Ovary (tissue), 10 donors: ENCODE measurements at regions of chr15 and their contacts with region 1.

Region 1: DNA sequence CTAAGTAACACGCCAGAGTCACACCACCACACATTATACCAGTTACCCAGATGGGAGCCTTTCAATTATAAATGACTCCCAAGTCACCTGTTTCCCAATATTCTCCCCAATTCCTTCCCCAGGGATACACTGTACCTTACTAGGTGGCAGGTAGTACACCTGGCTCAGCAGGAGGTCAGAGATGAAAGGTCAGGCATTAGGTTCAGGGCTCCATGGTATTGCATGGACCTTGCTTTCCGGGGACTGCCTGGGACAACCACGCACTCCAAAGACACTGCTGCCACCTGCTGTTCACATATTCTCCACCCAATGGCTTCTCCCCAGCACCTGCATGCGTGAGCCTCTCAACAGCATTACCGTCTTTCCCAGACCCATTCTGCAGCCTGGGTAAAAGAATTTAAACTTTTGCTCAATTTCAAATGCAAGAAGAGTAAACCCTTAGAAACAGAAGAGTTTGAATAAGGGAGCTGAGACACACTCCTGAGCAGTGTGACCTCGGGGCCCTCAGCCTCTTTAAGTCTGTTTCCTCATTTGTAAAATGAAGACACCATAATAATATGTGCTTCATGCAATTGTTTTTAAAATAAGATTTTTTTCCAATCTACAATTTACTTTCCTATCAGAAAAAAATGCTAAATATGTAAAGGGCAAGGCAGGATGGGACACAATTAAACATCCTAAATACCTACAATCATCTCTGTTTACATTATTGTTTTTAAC is 28.0 kb upstream of the LACTB start:
- DNase-seq: peak; percentile 82 to 87 (median 86)
- H3K4me3 ChIP-seq: no peak overlapping the region
- H3K27ac ChIP-seq: no peak overlapping the region
- H3K4me1 ChIP-seq: no peaks in the 10 kb centered on the region
- H3K27me3 ChIP-seq: no peaks in the 10 kb centered on the region
- CTCF ChIP-seq: peak; percentile 71 to 91 (median 86)
- EP300 ChIP-seq: no peak
- POLR2A ChIP-seq: no peak

Region 2: GRCh38 chr15:62782039-62782791 is 311.4 kb before region 1 on chr15:
- intact Hi-C with region 1: loop called in 3 of 4 experiments (anchors 2 to 10 kb)
- DNase-seq: peak; percentile 55 to 76 (median 69)
- H3K4me3 ChIP-seq: no peak overlapping the region
- H3K27ac ChIP-seq: no peak overlapping the region
- H3K4me1 ChIP-seq: peaks cover 14% of the 10 kb centered on the region
- H3K27me3 ChIP-seq: no peaks in the 10 kb centered on the region
- CTCF ChIP-seq: peak; percentile 26 to 55 (median 33)
- EP300 ChIP-seq: no peak
- POLR2A ChIP-seq: no peak

Region 3: DNA sequence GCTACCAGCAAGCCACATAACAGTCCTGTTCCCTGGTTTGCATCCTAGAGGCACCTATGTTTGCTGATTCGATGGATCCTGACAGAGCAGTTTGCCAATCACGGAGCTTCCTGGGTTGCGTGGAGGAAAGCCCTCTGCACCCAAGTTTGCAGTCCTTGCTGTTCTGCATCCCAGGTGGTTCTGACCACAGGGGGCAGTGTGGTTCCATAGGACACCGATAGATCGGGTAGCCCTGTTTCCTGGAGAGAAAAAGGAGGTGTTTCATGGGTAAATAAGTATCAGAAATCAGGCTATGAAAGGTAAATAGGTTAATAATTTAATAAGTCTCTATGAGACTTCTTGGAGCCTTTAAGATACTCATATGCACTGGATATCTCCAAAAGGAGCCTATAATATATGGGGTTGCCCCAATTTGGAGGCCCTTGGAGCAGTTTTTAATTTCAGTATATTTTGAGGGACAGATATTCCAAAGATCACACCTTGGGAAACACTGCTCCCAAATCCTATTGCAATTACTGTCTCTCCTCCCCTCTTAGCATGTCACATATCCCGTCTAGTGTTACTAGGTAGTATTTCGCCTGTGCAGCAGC is 245.7 kb before region 1 on chr15:
- intact Hi-C with region 1: loop called (anchors 1 to 10 kb)
- DNase-seq: peak; percentile 69 to 81 (median 77)
- H3K4me3 ChIP-seq: no peak overlapping the region
- H3K27ac ChIP-seq: no peak overlapping the region
- H3K4me1 ChIP-seq: no peaks in the 10 kb centered on the region
- H3K27me3 ChIP-seq: no peaks in the 10 kb centered on the region
- CTCF ChIP-seq: peak in 2 of 3 donors; percentile 41 to 58
- EP300 ChIP-seq: no peak
- POLR2A ChIP-seq: no peak

Region 4: DNA sequence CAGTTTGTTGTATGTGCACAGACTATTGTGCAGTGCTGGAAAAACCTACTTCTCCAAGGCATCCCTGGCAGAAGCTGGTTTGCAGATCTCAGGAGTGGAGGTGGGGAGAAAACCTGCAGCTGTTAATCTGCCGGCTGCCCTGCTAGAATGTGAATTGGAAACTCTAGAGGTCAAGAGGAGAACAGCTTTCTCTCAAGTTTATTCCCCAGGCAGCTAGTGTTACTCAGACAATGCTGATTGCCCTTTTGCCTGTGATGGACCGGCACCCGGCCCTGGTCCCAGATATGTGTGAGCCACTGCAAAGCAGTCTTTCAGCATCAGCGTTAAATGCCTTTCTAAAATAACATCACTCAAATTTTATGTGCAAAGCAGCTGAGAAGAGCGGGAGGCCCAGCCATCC is 180.8 kb before region 1 on chr15:
- intact Hi-C with region 1: no loop called
- DNase-seq: no peak
- H3K4me3 ChIP-seq: no peak overlapping the region
- H3K27ac ChIP-seq: no peak overlapping the region
- H3K4me1 ChIP-seq: no peaks in the 10 kb centered on the region
- H3K27me3 ChIP-seq: no peaks in the 10 kb centered on the region
- CTCF ChIP-seq: no peak
- EP300 ChIP-seq: no peak
- POLR2A ChIP-seq: no peak

Region 5: GRCh38 chr15:63030101-63030551 is 63.5 kb before region 1 on chr15:
- intact Hi-C with region 1: no loop called
- DNase-seq: peak in 2 of 5 donors; percentile 33 to 43
- H3K4me3 ChIP-seq: no peak overlapping the region
- H3K27ac ChIP-seq: no peak overlapping the region
- H3K4me1 ChIP-seq: peaks cover 1% of the 10 kb centered on the region
- H3K27me3 ChIP-seq: no peaks in the 10 kb centered on the region
- CTCF ChIP-seq: no peak
- EP300 ChIP-seq: no peak
- POLR2A ChIP-seq: no peak